ENCODE measurements at regions of chr7 and their contacts with region 1.

Region 1: DNA sequence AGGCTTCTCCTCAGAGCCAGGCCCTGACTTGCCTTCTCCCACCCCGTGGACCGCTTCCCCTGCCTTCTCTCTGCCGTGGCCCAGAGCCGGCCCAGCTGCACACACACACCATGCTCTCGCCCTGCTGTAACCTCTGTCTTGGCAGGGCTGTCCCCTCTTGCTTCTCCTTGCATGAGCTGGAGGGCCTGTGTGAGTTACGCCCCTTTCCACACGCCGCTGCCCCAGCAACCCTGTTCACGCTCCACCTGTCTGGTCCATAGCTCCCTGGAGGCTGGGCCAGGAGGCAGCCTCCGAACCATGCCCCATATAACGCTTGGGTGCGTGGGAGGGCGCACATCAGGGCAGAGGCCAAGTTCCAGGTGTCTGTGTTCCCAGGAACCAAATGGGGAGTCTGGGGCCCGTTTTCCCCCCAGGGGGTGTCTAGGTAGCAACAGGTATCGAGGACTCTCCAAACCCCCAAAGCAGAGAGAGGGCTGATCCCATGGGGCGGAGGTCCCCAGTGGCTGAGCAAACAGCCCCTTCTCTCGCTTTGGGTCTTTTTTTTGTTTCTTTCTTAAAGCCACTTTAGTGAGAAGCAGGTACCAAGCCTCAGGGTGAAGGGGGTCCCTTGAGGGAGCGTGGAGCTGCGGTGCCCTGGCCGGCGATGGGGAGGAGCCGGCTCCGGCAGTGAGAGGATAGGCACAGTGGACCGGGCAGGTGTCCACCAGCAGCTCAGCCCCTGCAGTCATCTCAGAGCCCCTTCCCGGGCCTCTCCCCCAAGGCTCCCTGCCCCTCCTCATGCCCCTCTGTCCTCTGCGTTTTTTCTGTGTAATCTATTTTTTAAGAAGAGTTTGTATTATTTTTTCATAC is 38.0 kb downstream of the LIMK1 start:
- DNase-seq: no peak
- ATAC-seq: no peak
- H3K4me3 ChIP-seq: no peak overlapping the region
- H3K4me3 Mint-ChIP-seq: no peak overlapping the region
- H3K27ac ChIP-seq: no peak overlapping the region
- H3K27ac Mint-ChIP-seq: no peak overlapping the region
- H3K4me1 ChIP-seq: no peaks in the 10 kb centered on the region
- H3K4me1 Mint-ChIP-seq: no peaks in the 10 kb centered on the region
- H3K27me3 ChIP-seq: no peaks in the 10 kb centered on the region
- H3K27me3 Mint-ChIP-seq: no peaks in the 10 kb centered on the region

Region 2: DNA sequence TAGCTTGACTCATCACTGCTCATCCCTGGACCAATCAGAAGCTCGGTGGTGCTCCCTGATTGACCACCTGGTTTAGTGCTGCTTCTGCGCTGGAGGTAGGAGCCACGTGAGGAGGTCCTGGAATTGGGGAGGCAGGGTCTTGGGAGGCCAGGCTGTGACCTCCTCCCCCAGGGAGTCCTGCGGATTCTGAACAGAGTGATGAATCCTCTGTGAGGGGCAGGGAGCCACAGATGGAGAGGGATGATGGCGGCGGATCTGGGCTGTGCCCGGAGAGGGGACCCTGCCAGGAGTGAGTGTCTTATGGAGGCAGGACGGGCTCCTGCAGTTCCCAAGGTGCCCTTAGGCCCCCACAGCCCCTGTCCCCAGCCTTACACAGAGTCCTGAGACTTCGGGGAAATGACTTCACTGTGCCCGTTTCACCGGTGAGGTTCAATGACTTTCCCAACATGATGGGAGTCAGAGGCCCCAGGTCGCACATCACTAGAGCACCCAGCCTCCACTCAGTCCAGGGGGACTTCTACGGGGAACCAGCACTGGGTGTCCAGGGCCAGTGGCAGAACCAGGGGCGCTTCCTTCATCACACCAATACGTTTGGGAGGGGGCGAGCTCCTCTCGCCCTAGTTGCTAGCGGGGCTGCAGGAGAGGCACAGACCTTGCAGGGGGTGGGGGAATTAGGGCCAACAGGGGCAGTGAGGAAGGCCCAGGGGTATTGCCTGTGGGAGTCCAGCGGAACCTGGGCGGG is 744.8 kb before region 1 on chr7:
- CTCF ChIA-PET with region 1: no interaction called
- POLR2A ChIA-PET with region 1: no interaction called
- DNase-seq: no peak
- ATAC-seq: no peak
- H3K4me3 ChIP-seq: no peak overlapping the region
- H3K4me3 Mint-ChIP-seq: peak overlapping the region in 1 of 3 donors; percentile 22
- H3K27ac ChIP-seq: no peak overlapping the region
- H3K27ac Mint-ChIP-seq: no peak overlapping the region
- H3K4me1 ChIP-seq: no peaks in the 10 kb centered on the region
- H3K4me1 Mint-ChIP-seq: peaks cover 0 to 3% (median 0%) of the 10 kb centered on the region in 3 donors
- H3K27me3 ChIP-seq: peaks cover 0 to 39% of the 10 kb centered on the region in 2 experiments
- H3K27me3 Mint-ChIP-seq: peaks cover 18 to 31% of the 10 kb centered on the region in 2 donors

Region 3: GRCh38 chr7:74017125-74017524 is 104.5 kb before region 1 on chr7:
- CTCF ChIA-PET with region 1: no interaction called
- POLR2A ChIA-PET with region 1: interaction called in 1 of 2 experiments, 11 read pairs
- DNase-seq: no peak
- ATAC-seq: no peak
- H3K4me3 ChIP-seq: no peak overlapping the region
- H3K4me3 Mint-ChIP-seq: no peak overlapping the region
- H3K27ac ChIP-seq: no peak overlapping the region
- H3K27ac Mint-ChIP-seq: no peak overlapping the region
- H3K4me1 ChIP-seq: no peaks in the 10 kb centered on the region
- H3K4me1 Mint-ChIP-seq: no peaks in the 10 kb centered on the region
- H3K27me3 ChIP-seq: peaks cover 0 to 46% of the 10 kb centered on the region in 2 experiments
- H3K27me3 Mint-ChIP-seq: peaks cover 0 to 7% of the 10 kb centered on the region in 2 donors

Measured in T-cell (primary cell).